ENCODE measurements at regions of chr19 and their contacts with region 1.

Region 1: GRCh38 chr19:6218491-6219162 is 61.1 kb downstream of the MLLT1 start:
- DNase-seq: peak; percentile 97
- ATAC-seq: peak; percentile 82
- H3K4me3 Mint-ChIP-seq: no peak overlapping the region
- H3K27ac Mint-ChIP-seq: 0 out of 2 replicates have a peak overlapping the region, but pooled peaks have one; percentile 24
- H3K4me1 Mint-ChIP-seq: peaks cover 3% of the 10 kb centered on the region; the same call in 1 of the 2 replicates
- H3K27me3 Mint-ChIP-seq: no peaks in the 10 kb centered on the region
- CTCF ChIP-seq: peak; percentile 99

Region 2: DNA sequence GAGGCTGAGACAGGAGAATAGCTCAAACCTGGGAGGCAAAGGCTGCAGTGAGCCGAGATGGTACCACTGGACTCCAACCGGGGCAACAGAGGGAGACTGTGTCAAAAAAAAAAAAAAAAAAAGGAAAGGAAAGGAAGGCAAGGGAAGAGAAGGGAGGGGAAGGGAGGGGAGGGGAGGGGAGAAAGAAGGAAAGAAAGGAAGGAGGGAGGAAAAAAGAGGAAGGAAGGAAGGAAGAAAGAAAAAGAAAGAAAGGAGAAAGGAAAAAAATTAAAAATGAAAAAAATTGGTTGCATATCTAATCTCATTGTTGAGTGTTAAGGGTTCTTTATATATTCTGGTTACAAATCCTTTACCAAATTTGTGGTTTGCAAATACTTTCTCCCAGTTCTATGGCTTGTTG is 37.5 kb before region 1 on chr19:
- CTCF ChIA-PET with region 1: no interaction called
- POLR2A ChIA-PET with region 1: no interaction called
- DNase-seq: no peak
- ATAC-seq: no peak
- H3K4me3 Mint-ChIP-seq: no peak overlapping the region
- H3K27ac Mint-ChIP-seq: no peak overlapping the region
- H3K4me1 Mint-ChIP-seq: no peaks in the 10 kb centered on the region
- H3K27me3 Mint-ChIP-seq: peaks cover 42% of the 10 kb centered on the region
- CTCF ChIP-seq: no peak

Region 3: DNA sequence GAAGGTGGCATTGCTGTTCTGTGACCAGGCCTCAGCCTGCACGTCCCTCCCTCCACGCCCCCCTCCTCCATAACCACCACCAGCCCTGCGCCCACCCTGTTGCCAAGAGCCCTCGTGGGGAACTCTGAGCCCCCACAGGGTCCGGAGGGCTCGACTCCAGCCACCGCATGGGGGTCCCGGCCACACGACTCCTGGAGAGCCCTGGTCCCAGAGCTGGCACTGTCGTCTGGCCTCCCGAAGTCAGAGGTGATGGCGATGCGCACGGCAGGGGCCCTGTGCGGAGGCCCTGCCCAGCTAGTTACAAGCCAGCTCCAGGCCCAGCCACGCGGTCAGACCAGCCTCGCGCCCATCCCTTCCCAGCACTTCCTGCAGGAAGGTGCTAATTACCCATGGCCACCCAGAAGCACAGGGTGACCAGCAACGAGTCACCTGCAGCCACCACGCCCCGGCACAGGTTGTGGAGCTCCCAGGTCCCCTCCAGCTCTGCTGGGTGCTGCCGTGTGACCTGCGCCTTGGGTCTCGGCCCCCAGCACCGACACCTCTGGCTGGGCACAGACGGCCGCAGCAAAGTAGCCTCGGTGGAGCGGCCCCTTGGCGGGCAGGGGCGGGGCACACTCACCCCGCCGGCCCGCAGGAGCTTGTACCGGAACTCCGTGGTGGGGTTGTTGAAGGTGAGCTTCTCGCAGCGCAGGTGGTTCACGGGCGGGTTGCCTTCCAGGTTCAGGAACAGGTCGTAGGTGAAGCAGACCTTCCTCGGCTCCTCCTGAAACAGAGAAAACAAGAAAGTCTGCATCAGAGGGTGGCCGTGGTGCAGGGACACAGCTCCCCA is 11.5 kb after region 1 on chr19:
- CTCF ChIA-PET with region 1: interaction called, 20 read pairs
- POLR2A ChIA-PET with region 1: no interaction called
- DNase-seq: no peak
- ATAC-seq: no peak
- H3K4me3 Mint-ChIP-seq: no peak overlapping the region
- H3K27ac Mint-ChIP-seq: no peak overlapping the region
- H3K4me1 Mint-ChIP-seq: peaks cover 13% of the 10 kb centered on the region
- H3K27me3 Mint-ChIP-seq: no peaks in the 10 kb centered on the region
- CTCF ChIP-seq: no peak

Region 4: DNA sequence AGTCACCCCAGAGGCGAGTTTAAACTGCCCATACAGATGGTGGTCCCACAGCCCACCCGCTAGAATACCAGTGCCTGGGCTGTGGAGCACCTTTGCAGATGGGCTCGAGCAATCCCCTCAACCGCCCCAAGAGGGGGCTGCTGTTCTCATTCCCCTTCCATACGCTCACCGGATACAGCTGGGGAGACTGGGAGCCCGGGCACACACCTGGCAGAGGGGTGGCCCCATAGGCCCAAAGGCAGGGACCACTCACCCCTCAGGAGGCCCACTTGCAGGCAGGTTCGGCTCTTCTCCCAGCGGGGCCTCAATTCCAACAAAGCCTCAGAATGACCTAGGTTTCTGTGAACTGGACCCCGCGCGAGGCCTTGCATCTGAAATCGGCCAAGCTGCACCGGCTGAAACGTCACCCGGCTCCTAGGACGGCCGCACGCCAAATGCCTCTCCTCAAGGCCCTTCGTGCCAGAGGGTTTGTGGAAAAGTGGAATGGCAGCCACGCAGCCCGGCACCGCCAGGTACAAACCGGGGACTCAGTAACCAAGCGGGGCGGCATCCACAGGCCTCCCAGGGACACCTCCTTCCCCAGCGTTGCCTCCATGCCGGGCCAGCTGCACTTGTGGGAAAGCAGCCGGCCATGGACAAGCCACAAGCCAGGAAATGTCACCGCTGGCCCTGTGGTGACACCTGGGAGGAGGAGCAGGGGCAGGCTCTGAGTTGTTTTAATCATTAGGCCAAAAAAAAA is 42.5 kb after region 1 on chr19:
- CTCF ChIA-PET with region 1: interaction called, 12 read pairs
- POLR2A ChIA-PET with region 1: interaction called, 4 read pairs
- DNase-seq: peak; percentile 81
- ATAC-seq: peak; percentile 97
- H3K4me3 Mint-ChIP-seq: no peak overlapping the region
- H3K27ac Mint-ChIP-seq: no peak overlapping the region
- H3K4me1 Mint-ChIP-seq: peaks cover 16% of the 10 kb centered on the region
- H3K27me3 Mint-ChIP-seq: no peaks in the 10 kb centered on the region
- CTCF ChIP-seq: peak; percentile 57

Region 5: GRCh38 chr19:6279620-6279930 is 60.9 kb after region 1 on chr19:
- CTCF ChIA-PET with region 1: interaction called, 12 read pairs
- POLR2A ChIA-PET with region 1: no interaction called
- DNase-seq: no peak
- ATAC-seq: peak; percentile 23
- H3K4me3 Mint-ChIP-seq: no peak overlapping the region
- H3K27ac Mint-ChIP-seq: no peak overlapping the region
- H3K4me1 Mint-ChIP-seq: peaks cover 41% of the 10 kb centered on the region
- H3K27me3 Mint-ChIP-seq: peaks cover 19% of the 10 kb centered on the region
- CTCF ChIP-seq: no peak

Region 6: DNA sequence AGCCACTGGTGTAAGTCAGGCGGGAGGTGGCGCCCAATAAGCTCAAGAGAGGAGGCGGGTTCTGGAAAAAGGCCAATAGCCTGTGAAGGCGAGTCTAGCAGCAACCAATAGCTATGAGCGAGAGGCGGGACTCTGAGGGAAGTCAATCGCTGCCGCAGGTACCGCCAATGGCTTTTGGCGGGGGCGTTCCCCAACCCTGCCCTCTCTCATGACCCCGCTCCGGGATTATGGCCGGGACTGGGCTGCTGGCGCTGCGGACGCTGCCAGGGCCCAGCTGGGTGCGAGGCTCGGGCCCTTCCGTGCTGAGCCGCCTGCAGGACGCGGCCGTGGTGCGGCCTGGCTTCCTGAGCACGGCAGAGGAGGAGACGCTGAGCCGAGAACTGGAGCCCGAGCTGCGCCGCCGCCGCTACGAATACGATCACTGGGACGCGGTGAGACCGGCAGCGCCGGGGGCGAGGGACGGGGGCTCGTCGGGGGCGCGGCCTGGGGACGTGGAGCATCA is 154.0 kb after region 1 on chr19 and contains the start of gene ALKBH7:
- CTCF ChIA-PET with region 1: interaction called, 13 read pairs
- POLR2A ChIA-PET with region 1: no interaction called
- DNase-seq: peak; percentile 96
- ATAC-seq: peak; percentile 74
- H3K4me3 Mint-ChIP-seq: peak within 1 kb of the TSS; percentile 85
- H3K27ac Mint-ChIP-seq: peak within 1 kb of the TSS; percentile 99
- H3K4me1 Mint-ChIP-seq: peaks cover 17% of the 10 kb centered on the region
- H3K27me3 Mint-ChIP-seq: no peaks in the 10 kb centered on the region
- CTCF ChIP-seq: no peak
- total RNA-seq, gene ALKBH7: 96.4 to 119 TPM (median 114 TPM) in 3 replicates